Spleen (tissue), 13 donors: ENCODE measurements at regions of chr11 and their contacts with region 1.

Region 1: GRCh38 chr11:35969089-35970042 is 25.5 kb downstream of the LDLRAD3 start:
- DNase-seq: no peak
- H3K4me3 ChIP-seq: no peak overlapping the region
- H3K27ac ChIP-seq: no peak overlapping the region
- H3K4me1 ChIP-seq: no peaks in the 10 kb centered on the region
- H3K27me3 ChIP-seq: no peaks in the 10 kb centered on the region
- CTCF ChIP-seq: no peak
- POLR2A ChIP-seq: no peak

Region 2: GRCh38 chr11:35919244-35919643 is 50.1 kb before region 1 on chr11:
- intact Hi-C with region 1: loop called (anchors 10 kb)
- DNase-seq: no peak
- H3K4me3 ChIP-seq: no peak overlapping the region
- H3K27ac ChIP-seq: no peak overlapping the region
- H3K4me1 ChIP-seq: peaks cover 0 to 12% (median 5%) of the 10 kb centered on the region in 6 donors
- H3K27me3 ChIP-seq: peaks cover 0 to 13% (median 0%) of the 10 kb centered on the region in 7 donors
- CTCF ChIP-seq: no peak
- POLR2A ChIP-seq: no peak